ENCODE measurements at regions of chr19 and their contacts with region 1.

Region 1: GRCh38 chr19:10259162-10259905 is 7.3 kb downstream of the MRPL4 start:
- DNase-seq: peak; percentile 46
- ATAC-seq: peak; percentile 75
- H3K4me3 ChIP-seq: no peak overlapping the region
- H3K27ac ChIP-seq: no peak overlapping the region
- H3K4me1 ChIP-seq: peaks cover 6% of the 10 kb centered on the region; the same call in 1 of the 2 replicates
- H3K27me3 ChIP-seq: no peaks in the 10 kb centered on the region
- CTCF ChIP-seq: peak; percentile 81; the same call in 1 of the 2 replicates

Region 2: DNA sequence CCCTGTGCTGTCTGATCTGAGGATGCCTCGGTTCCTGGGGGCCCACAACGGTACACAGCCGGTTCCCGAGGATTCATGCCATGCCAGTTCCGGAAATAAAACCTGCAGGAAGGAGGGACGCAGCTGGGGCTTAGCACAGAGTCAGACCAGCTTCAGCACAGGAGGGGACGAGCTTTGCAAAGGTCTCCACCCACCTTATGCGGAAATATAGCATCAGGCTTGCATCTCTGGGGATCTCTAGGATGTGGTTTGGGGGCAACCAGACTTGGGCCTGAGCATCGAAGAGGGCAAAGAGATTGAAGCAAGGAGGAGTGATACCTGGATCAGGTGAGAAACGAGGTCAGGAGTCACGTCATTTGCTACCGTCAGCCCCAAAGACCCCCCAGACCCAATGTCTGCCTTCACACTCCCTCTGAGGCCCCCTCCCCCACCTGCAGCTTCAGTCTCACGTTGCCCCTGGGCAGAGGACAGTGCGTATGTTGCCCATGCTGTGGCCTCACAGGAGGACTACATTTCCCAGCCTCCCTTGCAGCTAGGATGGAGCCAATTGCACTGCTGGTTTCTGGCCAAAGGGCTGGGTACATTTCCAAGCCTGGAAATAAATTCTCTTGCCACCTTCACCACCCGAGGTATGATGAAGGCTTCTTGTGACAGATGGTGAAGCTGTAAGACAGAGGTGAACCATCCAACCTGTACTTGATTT is 108.9 kb after region 1 on chr19:
- CTCF ChIA-PET with region 1: interaction called, 12 read pairs
- POLR2A ChIA-PET with region 1: no interaction called
- in situ Hi-C with region 1: no loop called
- intact Hi-C with region 1: no loop called
- DNase-seq: no peak
- ATAC-seq: peak; percentile 60; the same call in 1 of the 2 replicates
- H3K4me3 ChIP-seq: no peak overlapping the region
- H3K27ac ChIP-seq: no peak overlapping the region
- H3K4me1 ChIP-seq: no peaks in the 10 kb centered on the region
- H3K27me3 ChIP-seq: no peaks in the 10 kb centered on the region
- CTCF ChIP-seq: no peak

Region 3: DNA sequence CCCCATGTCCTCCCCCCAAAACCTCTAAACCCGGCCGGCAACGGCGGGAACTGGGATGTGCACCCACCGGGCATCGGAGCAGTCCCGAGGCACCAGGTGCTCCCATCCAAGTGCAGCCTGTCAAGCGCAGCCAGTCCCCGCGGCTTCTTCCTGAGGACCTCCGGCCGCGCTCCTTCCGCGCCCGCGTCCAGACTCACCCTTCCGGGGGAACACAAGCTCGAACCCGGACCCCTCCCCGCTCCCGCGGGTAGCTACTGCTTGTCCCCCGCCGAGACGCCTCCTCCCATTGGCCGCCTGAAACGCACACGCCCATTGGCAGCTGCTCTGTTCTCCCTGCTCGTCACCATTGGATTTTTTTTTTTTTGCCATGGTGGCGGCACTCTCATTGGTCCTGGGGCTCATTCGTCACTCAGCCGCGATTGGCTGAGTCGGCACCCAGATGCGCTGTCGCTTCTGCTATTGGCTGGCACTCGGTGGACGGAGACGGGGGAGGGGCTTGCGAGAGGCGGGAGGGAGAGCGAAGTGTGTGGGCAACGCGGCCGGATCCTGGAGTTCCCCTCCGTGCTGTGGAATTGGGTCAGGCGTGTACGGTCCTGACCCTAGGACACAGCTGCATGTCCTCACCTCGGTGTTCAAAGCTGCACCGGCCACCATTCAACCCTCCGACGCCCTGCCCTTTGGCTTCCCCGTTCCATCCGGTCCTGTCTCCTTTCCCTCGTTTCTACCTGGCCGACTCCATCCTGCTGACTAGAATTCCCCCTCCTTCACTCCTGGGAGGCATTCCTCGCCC is 121.2 kb after region 1 on chr19 and contains the start of gene TYK2:
- CTCF ChIA-PET with region 1: interaction called, 10 read pairs
- POLR2A ChIA-PET with region 1: interaction called, 3 read pairs
- in situ Hi-C with region 1: no loop called
- intact Hi-C with region 1: loop called (anchors 5 kb)
- DNase-seq: peak; percentile 94
- ATAC-seq: peak; percentile 98
- H3K4me3 ChIP-seq: peak within 1 kb of the TSS; percentile 94 to 95
- H3K27ac ChIP-seq: peak within 1 kb of the TSS; percentile 93
- H3K4me1 ChIP-seq: peaks cover 3% of the 10 kb centered on the region; the same call in 1 of the 2 replicates
- H3K27me3 ChIP-seq: no peaks in the 10 kb centered on the region
- CTCF ChIP-seq: no peak
- total RNA-seq, gene TYK2: 104 TPM

Region 4: GRCh38 chr19:10388957-10389356 is 129.6 kb after region 1 on chr19:
- CTCF ChIA-PET with region 1: interaction called, 13 read pairs
- POLR2A ChIA-PET with region 1: interaction called, 3 read pairs
- in situ Hi-C with region 1: no loop called
- intact Hi-C with region 1: loop called (anchors 5 kb)
- DNase-seq: peak; percentile 60
- ATAC-seq: peak; percentile 79
- H3K4me3 ChIP-seq: no peak overlapping the region
- H3K27ac ChIP-seq: no peak overlapping the region
- H3K4me1 ChIP-seq: no peaks in the 10 kb centered on the region
- H3K27me3 ChIP-seq: no peaks in the 10 kb centered on the region
- CTCF ChIP-seq: peak; percentile 87

Measured in Panc1 (cell line).